ENCODE measurements at regions of chr9 and their contacts with region 1.

Region 1: DNA sequence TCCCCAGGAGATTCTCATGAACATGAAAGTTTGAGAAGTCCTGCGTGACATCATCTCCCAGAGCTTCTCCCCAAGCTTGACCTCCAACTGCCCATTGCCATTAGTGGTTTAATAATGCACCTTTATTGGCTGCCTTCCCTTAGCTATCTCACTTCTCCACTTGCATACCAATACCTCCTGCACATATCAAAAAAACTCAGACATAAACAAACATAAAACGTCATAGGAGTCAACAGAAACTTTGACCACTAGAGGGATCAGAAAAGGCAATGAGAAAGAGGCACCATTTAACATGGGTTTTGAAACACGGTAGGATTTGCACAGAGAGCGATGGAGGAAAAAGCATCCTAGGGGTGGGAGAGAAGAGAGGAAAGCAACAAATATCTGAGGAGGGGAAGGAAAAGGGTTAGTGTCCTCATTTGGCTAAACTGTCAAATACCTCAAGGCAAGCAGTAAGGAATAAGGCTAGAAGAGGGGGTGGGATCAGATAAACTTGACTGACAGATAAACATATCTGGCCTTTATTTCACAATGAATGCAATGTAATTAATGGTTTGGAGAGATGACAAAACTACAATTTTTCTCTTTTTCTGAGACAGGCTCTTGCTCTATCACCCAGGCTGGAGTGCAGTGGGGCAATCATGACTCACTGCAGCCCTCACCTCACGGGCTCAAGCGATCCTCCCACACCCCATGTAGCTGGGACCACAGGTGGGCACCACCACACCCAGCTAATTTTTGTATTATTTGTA is 27.0 kb downstream of the GNAQ start:
- DNase-seq: no peak
- ATAC-seq: peak; percentile 44
- H3K4me3 ChIP-seq: no peak overlapping the region
- H3K4me3 Mint-ChIP-seq: peak overlapping the region in 2 of 10 donors; percentile 0 to 18
- H3K27ac ChIP-seq: no peak overlapping the region
- H3K27ac Mint-ChIP-seq: peak overlapping the region in 1 of 9 donors; percentile 0
- H3K4me1 ChIP-seq: peaks cover 0 to 21% of the 10 kb centered on the region in 2 donors
- H3K4me1 Mint-ChIP-seq: peaks cover 32 to 87% (median 69%) of the 10 kb centered on the region in 7 donors
- H3K27me3 ChIP-seq: no peaks in the 10 kb centered on the region
- H3K27me3 Mint-ChIP-seq: no peaks in the 10 kb centered on the region

Region 2: DNA sequence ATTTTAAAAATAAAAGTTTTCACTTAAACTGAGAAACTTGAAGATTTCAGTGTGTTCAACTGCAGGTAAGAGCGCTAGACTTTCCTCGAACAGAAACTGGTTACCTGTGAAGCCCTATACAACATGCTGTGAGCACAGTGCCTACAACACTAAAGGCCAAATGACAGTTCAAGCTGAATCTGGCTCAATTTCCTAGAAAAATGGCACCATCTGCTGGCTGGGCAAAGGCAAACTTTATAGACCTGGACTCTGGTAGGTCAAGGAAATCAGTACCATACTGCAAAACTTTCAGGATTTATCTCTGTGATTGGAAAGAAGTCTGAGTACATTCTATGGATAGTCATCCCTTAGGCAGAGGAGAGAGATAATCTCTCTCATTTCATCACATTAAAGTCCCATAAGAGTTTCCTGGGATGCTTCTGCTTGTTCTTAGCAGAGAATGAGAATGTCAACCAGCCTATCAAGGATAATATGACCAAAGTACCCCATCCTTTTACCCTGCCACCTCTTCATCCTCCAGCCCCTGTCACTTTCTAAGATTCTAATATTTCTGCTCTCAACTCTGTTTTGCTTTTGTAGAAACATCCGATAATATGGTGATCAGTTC is 1017.0 kb before region 1 on chr9:
- CTCF ChIA-PET with region 1: no interaction called
- POLR2A ChIA-PET with region 1: no interaction called
- intact Hi-C with region 1: no loop called
- DNase-seq: no peak
- ATAC-seq: no peak
- H3K4me3 ChIP-seq: no peak overlapping the region
- H3K4me3 Mint-ChIP-seq: no peak overlapping the region
- H3K27ac ChIP-seq: no peak overlapping the region
- H3K27ac Mint-ChIP-seq: no peak overlapping the region
- H3K4me1 ChIP-seq: no peaks in the 10 kb centered on the region
- H3K4me1 Mint-ChIP-seq: no peaks in the 10 kb centered on the region
- H3K27me3 ChIP-seq: no peaks in the 10 kb centered on the region
- H3K27me3 Mint-ChIP-seq: peaks cover 8 to 23% (median 17%) of the 10 kb centered on the region in 5 donors

Region 3: DNA sequence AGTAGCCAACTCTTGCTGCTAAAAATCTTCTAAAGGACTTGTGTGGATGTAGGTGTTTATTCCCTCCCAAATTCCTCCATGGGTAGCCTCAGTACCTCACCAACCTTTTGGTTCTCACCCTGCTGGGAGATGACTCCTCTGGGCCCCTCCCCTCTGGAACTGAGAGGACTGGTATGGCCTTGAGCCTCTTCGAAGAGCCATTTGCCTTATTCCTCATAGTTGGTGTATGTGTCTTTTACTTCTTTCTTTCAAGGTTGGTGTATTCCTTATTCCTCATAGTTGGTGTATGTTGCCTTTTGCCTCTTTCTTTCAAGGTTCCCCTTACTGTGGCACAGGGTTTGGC is 21.4 kb before region 1 on chr9:
- CTCF ChIA-PET with region 1: no interaction called
- POLR2A ChIA-PET with region 1: no interaction called
- intact Hi-C with region 1: loop called in 1 of 2 experiments (anchors 2 kb)
- DNase-seq: no peak
- ATAC-seq: no peak
- H3K4me3 ChIP-seq: no peak overlapping the region
- H3K4me3 Mint-ChIP-seq: peak overlapping the region in 8 of 10 donors; percentile 4 to 72 (median 34)
- H3K27ac ChIP-seq: no peak overlapping the region
- H3K27ac Mint-ChIP-seq: peak overlapping the region in 8 of 9 donors; percentile 10 to 80 (median 46)
- H3K4me1 ChIP-seq: peaks cover 13 to 42% of the 10 kb centered on the region in 2 donors
- H3K4me1 Mint-ChIP-seq: peaks cover 55 to 88% (median 82%) of the 10 kb centered on the region in 7 donors
- H3K27me3 ChIP-seq: no peaks in the 10 kb centered on the region
- H3K27me3 Mint-ChIP-seq: no peaks in the 10 kb centered on the region

Region 4: GRCh38 chr9:78023003-78023741 is 18.5 kb after region 1 on chr9:
- CTCF ChIA-PET with region 1: interaction called, 4 read pairs
- POLR2A ChIA-PET with region 1: interaction called, 3 read pairs
- intact Hi-C with region 1: loop called in 1 of 2 experiments (anchors 2 kb)
- DNase-seq: peak in 1 of 9 donors; percentile 21
- ATAC-seq: peak; percentile 83
- H3K4me3 ChIP-seq: no peak overlapping the region
- H3K4me3 Mint-ChIP-seq: peak overlapping the region in 9 of 10 donors; percentile 8 to 84 (median 57)
- H3K27ac ChIP-seq: no peak overlapping the region
- H3K27ac Mint-ChIP-seq: peak overlapping the region in 4 of 9 donors; percentile 24 to 78 (median 54)
- H3K4me1 ChIP-seq: peaks cover 0 to 25% of the 10 kb centered on the region in 2 donors
- H3K4me1 Mint-ChIP-seq: peaks cover 41 to 85% (median 72%) of the 10 kb centered on the region in 7 donors
- H3K27me3 ChIP-seq: no peaks in the 10 kb centered on the region
- H3K27me3 Mint-ChIP-seq: no peaks in the 10 kb centered on the region

Region 5: DNA sequence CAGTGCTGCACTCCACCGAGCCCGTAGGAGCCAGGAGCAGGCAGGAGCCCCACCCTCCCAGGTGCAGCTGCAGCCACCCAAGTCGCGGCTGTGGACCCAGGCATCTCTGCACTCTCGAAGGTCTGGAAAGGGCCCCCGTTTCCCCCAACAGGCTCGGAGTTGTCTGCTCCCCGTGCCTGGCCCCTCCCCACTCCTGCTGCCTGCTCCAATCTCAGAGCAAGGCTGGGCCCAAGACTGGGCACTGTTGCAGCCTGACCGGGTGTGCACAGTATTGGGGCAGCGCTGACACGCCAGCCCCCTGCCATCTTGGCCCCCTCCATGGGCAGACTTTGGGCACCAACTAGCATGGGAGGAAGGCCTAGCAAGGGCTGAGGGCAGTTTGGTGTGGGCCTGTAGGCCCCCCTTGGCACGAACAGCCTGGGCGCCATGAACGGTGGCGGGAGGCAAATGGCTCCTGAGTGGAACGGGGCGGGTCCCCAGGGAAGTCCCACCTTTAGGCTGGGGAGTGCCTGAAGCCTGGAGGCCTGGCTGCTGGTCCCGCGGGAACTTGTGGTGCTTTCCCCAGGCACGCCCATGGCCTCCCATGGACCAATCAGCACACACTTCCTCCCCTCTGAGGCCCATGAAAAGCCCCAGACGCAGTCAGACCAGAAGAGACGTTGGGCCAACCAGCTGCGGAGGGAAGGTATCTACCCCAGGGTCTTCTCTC is 352.7 kb after region 1 on chr9:
- CTCF ChIA-PET with region 1: no interaction called
- POLR2A ChIA-PET with region 1: no interaction called
- intact Hi-C with region 1: no loop called
- DNase-seq: no peak
- ATAC-seq: no peak
- H3K4me3 ChIP-seq: no peak overlapping the region
- H3K4me3 Mint-ChIP-seq: no peak overlapping the region
- H3K27ac ChIP-seq: no peak overlapping the region
- H3K27ac Mint-ChIP-seq: no peak overlapping the region
- H3K4me1 ChIP-seq: no peaks in the 10 kb centered on the region
- H3K4me1 Mint-ChIP-seq: peaks cover 0 to 10% (median 2%) of the 10 kb centered on the region in 7 donors
- H3K27me3 ChIP-seq: no peaks in the 10 kb centered on the region
- H3K27me3 Mint-ChIP-seq: no peaks in the 10 kb centered on the region